Activated T-helper 1 cell treated with anti-CD3 and anti-CD28 coated beads, Interleukin-12 subunit alpha, Interleukin-12 subunit beta, Interleukin-2, Interleukin-4 antibody, amounts not matched to agents 30 ng/mL and 10 ng/mL and 1 ng/mL, durations not matched to agents 14 hours and 24 hours and 36 hours (primary cell): ENCODE measurements at regions of chr3 and their contacts with region 1.

Region 1: DNA sequence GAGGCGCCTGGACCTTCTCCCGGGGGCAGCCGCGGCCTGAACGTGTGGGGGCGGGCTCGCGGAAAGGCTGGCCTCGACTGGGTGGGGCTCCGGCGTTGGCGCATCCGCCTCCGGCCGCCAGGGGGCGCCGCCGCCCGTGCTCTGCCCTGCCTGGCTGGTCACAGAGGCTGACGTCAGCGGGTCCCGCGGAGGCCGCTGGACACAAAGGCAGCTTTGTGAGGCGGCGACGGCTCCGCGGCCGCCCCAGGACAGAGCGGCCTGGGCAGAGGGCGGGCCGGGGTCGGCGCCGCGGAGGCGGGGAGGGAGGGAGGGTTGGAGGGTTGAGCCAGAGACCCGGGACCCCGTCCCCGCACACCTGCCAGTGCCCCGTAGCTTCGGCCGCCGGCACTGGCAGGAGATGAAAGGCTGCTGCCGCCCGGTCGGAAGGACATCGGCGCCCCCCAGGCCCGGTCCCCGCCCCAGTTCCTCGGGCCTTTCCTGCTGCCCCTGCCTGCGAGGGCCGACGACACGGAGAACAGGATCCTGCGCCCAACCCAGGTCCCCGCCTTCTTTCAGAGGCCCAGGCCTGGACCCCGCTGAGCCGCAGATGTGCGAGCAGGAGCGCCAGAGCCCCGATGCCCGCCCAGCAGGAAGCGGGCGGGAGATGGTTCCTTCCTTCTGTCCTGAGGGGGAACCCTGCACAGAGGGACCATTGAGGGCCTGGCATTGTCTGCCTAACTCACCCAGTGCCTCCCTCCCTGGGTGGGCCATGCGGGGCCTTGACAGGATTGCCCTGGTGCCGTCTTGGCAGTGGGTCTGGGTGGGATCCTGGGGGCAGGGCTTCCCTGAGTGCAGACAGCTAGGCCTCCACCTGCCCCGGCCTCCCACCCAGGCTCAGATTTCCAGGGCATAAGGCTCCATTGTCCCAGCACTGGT is 8.7 kb upstream of the SEMA3B start:
- DNase-seq: peak; percentile 86
- H3K4me3 Mint-ChIP-seq: peak overlapping the region; percentile 68
- H3K27ac Mint-ChIP-seq: peak overlapping the region; percentile 68
- H3K4me1 Mint-ChIP-seq: no peaks in the 10 kb centered on the region
- H3K27me3 Mint-ChIP-seq: peaks cover 1% of the 10 kb centered on the region

Region 2: GRCh38 chr3:50211930-50212329 is 48.4 kb before region 1 on chr3:
- intact Hi-C with region 1: no loop called
- DNase-seq: no peak
- H3K4me3 Mint-ChIP-seq: no peak overlapping the region
- H3K27ac Mint-ChIP-seq: no peak overlapping the region
- H3K4me1 Mint-ChIP-seq: peaks cover 4% of the 10 kb centered on the region
- H3K27me3 Mint-ChIP-seq: peaks cover 22% of the 10 kb centered on the region

Region 3: DNA sequence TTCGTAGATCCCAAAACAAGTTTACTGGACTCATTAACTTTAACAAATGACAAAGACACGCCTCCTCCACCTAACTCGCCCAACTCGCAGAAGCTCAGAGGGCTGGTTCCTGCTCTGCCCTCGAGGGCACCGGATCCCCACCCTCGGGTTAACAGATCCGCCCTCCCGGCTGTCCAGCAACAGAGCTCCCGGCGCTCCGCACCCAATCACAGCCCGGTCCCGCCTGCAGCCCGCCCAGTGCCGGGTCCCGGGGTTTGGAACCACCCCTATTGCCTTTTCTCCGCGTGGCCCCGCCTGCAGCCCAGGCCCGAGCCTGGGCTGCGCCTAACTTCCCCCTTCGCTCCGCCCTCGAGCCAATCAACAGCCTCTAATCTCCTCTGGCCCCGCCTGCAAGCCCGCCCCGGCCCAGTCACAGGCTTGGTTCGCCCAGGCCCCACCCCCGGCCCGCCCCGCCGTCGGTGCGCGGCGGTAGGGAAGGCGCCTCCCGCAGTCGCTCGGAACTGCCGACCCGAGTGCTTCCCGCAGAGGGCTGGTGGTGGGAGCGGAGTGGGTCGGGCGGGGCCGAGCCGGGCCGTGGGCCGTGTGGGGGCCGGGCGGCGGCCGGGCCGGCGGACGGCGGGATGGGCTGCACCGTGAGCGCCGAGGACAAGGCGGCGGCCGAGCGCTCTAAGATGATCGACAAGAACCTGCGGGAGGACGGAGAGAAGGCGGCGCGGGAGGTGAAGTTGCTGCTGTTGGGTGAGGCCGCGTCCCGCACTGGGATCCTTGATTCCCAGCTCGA is 24.4 kb before region 1 on chr3 and contains the start of gene GNAI2:
- intact Hi-C with region 1: loop called (anchors 1 kb)
- DNase-seq: peak; percentile 99
- H3K4me3 Mint-ChIP-seq: peak within 1 kb of the TSS; percentile 99
- H3K27ac Mint-ChIP-seq: peak within 1 kb of the TSS; percentile 94
- H3K4me1 Mint-ChIP-seq: peaks cover 32% of the 10 kb centered on the region
- H3K27me3 Mint-ChIP-seq: no peaks in the 10 kb centered on the region
- total RNA-seq, gene GNAI2: 237 and 238 TPM in 2 replicates

Region 4: GRCh38 chr3:50890688-50891344 is 630.5 kb after region 1 on chr3:
- intact Hi-C with region 1: no loop called
- DNase-seq: no peak
- H3K4me3 Mint-ChIP-seq: no peak overlapping the region
- H3K27ac Mint-ChIP-seq: no peak overlapping the region
- H3K4me1 Mint-ChIP-seq: no peaks in the 10 kb centered on the region
- H3K27me3 Mint-ChIP-seq: peaks cover 5% of the 10 kb centered on the region